Mammary epithelial cell (primary cell): ENCODE measurements at regions of chr3 and their contacts with region 1.

Region 1: DNA sequence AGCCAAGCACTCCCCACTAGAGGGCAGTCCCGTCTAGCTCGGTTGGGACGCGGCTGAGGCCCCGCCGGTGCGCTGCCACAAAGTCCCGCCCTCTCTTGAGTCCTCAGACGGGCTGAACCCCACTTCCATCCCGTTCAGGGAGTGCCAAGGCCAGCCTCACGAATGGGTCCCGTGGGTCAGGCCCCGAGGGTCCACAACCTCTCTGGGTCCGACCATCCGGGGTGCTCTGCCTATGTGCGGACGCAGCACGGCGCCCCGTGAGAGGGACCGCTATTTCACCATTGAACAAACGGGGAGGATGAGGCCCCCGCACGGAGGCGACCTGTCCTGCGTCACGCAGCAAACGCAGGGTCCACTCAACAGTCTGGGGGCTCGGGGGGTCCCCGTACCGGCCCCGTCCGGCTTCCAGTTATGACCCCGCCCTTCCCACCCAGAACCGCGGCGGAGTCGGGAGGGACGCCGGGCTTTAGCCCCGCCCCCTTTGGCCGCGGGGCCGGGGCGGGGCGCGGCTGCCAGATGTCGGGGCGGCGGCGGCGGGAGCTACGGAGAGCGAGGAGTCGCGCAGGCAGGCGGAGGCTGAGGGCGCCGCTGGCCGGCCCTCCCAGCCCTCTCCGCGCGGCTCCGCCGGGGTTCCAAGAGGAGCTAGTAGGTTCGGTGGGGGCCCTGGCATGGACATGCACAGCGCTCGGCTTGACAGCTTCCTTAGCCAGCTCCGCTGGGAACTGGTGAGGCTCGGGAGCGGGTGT is at the start of gene INKA1:
- DNase-seq: peak; percentile 82
- H3K4me3 ChIP-seq: peak within 1 kb of the TSS; percentile 70 to 85 (median 77)
- H3K27ac ChIP-seq: peak within 1 kb of the TSS; percentile 40
- H3K4me1 ChIP-seq: peaks cover 43% of the 10 kb centered on the region
- H3K27me3 ChIP-seq: no peaks in the 10 kb centered on the region
- CTCF ChIP-seq: peak; percentile 79 to 92
- total RNA-seq, gene INKA1: 17.3 to 22.6 TPM

Region 2: DNA sequence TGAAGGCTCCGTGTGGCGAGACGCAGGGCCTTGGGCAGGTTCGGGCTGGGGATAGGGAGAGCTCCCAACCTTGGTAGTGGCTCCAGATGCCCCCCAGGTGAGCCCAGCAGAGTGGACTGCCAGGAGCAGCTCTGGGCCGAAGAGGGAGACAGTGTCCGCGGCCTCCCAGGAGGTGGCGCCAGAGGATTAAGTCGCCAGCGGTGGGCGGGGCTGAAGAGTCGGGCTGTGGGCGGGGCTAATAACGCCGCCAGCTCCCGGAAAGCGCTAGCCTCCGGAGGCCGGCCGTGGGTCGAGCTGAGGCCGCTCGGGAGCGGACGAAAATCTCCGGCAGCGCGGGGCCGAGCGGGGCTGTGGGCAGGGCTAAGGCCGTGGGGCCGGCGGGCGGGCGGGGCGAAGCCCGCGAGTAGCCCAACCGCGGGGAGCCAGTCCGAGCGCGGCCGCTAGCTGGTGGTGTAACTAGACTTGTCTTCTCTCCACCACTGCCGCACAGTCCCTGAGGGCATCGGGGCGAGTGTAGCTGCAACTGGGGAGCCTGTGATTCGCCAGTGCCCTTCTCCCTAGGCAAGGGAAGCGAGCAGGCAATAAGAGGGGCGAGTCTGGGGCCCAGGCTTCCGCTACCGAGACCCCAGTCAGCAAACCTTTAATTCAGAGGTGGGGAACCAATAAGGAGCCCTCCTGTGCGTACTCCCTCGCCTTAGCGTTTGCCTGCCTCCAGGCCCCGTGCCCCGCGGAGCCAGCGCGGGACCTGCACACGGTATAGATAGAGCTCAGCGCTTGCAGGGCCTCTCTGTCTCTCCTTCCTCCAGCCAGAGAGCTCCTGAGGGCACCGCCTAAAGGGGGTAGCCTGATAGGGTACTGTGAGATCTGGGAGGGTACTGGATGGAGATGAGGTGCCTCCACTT is 263.0 kb before region 1 on chr3:
- CTCF ChIA-PET with region 1: no interaction called
- dilution Hi-C with region 1: no loop called
- in situ Hi-C with region 1: no loop called
- intact Hi-C with region 1: loop called (anchors 1 kb)
- DNase-seq: peak; percentile 93
- H3K4me3 ChIP-seq: peak overlapping the region; percentile 30 to 47 (median 42)
- H3K27ac ChIP-seq: no peak overlapping the region
- H3K4me1 ChIP-seq: peaks cover 5% of the 10 kb centered on the region
- H3K27me3 ChIP-seq: no peaks in the 10 kb centered on the region
- CTCF ChIP-seq: peak; percentile 55 to 89

Region 3: GRCh38 chr3:49703443-49703927 is 99.4 kb before region 1 on chr3:
- CTCF ChIA-PET with region 1: no interaction called
- dilution Hi-C with region 1: no loop called
- in situ Hi-C with region 1: no loop called
- intact Hi-C with region 1: loop called (anchors 1 kb)
- DNase-seq: peak; percentile 49
- H3K4me3 ChIP-seq: no peak overlapping the region
- H3K27ac ChIP-seq: no peak overlapping the region
- H3K4me1 ChIP-seq: peaks cover 3% of the 10 kb centered on the region
- H3K27me3 ChIP-seq: no peaks in the 10 kb centered on the region
- CTCF ChIP-seq: peak; percentile 93 to 94

Region 4: DNA sequence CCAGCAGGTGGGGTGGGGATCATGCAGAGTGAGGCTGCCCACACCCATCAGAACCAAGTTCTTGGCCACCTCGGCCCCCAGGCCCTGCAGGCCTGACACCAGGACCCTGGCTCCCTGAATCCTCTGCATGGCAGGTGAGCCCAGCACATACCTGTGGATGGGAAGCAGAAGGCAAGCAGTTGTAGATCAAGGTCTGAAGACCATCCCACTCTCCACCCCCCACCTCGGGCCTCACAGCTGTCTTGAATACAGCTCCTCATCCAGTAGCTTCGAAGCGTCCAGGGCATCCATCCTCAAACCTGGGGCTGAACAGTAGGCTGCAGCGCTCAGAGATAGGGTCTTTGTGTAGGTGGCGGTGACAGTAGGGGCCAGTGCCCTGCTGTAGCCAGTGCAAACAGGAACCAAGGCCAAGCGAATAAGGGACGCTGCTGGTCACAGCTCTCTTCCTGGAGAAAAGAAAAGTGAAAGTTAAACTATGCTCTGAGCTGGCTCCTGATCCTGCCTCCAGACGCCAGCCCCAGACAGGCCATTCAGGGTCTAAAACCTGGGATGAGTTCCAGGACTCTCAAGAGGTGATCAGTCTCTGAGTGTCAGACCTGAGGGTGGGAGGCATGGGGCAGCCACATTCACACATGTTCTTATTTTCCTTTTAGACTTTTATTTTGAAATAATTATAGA is 10.7 kb after region 1 on chr3 and contains the start of gene UBA7:
- CTCF ChIA-PET with region 1: no interaction called
- dilution Hi-C with region 1: no loop called
- in situ Hi-C with region 1: no loop called
- intact Hi-C with region 1: loop called (anchors 1 kb)
- DNase-seq: peak; percentile 52
- H3K4me3 ChIP-seq: peak within 1 kb of the TSS; percentile 19 to 37 (median 31)
- H3K27ac ChIP-seq: no peak within 1 kb of the TSS
- H3K4me1 ChIP-seq: peaks cover 10% of the 10 kb centered on the region
- H3K27me3 ChIP-seq: no peaks in the 10 kb centered on the region
- CTCF ChIP-seq: no peak
- total RNA-seq, gene UBA7: 9.1 to 11.3 TPM

Region 5: DNA sequence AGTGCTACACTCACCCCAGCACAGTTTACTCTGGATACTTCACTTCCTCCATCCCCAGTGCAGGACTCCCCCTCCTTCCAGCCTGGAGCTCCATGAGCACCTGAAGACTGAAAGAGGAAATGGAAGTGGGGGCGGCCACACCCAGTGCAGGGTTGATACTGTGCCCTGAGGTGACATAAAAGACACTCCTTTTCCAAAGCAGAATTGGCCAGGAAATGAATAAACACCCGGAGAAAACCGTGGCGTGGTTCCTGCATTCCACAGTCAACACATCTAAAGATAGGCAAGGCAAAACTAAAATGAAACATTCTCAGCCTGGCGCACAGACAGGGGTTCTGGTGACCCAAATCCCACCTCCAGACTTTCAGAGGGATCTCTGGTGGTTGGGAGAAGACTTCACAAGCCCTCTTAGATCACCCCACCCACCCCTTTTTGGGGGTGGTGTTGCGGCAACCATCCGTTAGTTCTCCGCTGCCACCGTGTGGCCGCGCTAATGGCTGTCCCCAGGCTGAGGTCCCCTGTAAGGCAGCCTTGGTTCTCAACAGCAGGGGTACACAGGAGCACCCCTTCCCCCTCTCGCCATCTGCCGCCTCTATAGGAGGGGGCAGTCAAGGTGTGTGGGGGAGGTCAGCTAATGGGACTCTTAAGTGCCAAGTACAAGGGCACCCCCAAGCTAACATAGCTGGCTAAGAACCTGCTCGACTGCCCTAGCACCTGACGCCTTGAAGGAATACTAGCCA is 103.3 kb after region 1 on chr3:
- CTCF ChIA-PET with region 1: interaction called, 5 read pairs
- dilution Hi-C with region 1: no loop called
- in situ Hi-C with region 1: no loop called
- intact Hi-C with region 1: loop called (anchors 1 kb)
- DNase-seq: peak; percentile 60
- H3K4me3 ChIP-seq: peak overlapping the region; percentile 17 to 34 (median 25)
- H3K27ac ChIP-seq: peak overlapping the region; percentile 31
- H3K4me1 ChIP-seq: peaks cover 48% of the 10 kb centered on the region
- H3K27me3 ChIP-seq: no peaks in the 10 kb centered on the region
- CTCF ChIP-seq: peak; percentile 59 to 83

Region 6: DNA sequence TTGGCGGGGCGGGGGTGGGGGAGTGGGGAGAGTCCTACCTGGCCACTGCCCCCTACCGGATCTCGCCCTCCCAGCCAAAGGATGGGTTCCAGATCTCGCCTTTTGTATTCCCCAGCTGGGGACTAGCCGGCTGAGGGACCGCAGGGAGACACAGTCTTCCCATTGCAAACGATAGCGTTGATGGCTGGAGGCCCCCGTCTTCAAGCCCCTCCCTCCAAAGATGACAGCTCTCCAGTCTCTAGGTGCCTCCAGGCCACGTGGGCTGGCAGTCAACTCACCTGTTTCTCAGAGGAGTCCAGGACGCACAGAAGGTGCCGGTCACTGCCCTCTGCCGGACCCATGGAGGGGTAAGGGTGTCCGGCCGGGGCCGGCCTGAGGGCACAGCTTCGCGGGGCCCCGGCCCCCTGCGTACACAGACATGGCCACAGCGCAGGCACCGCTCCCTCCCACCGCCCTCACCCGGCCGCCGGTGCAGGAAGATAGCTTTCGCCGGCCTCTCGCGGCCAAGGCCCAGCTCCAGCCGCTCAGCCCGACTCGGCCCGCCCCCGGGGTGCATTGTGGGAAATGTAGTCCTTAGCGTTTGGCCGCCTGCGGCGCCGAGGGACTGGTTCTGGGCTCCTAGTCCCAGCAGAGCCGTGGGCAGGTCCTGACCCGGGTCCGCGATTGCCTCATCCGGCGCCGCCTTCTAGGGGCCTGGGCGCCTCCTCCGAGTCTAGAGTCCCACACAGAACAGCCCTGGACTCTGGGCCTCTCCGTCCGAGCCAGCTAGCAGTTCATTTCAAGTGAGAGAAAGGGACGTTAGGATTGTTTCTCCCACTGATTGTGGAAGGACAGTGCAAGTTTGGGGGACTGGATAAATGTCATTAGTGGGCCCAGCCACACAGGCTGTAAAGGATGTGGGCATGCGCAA is 126.7 kb after region 1 on chr3 and contains the start of gene MON1A:
- CTCF ChIA-PET with region 1: no interaction called
- dilution Hi-C with region 1: no loop called
- in situ Hi-C with region 1: no loop called
- intact Hi-C with region 1: loop called (anchors 1 kb)
- DNase-seq: peak; percentile 89
- H3K4me3 ChIP-seq: peak within 1 kb of the TSS; percentile 65 to 72 (median 66)
- H3K27ac ChIP-seq: no peak within 1 kb of the TSS
- H3K4me1 ChIP-seq: peaks cover 25% of the 10 kb centered on the region
- H3K27me3 ChIP-seq: no peaks in the 10 kb centered on the region
- CTCF ChIP-seq: peak in 1 of 2 donors; percentile 47
- total RNA-seq, gene MON1A: 11.5 to 15.9 TPM

Region 7: GRCh38 chr3:50088725-50089608 is 286.1 kb after region 1 on chr3 and contains the start of gene RBM5:
- CTCF ChIA-PET with region 1: no interaction called
- dilution Hi-C with region 1: no loop called
- in situ Hi-C with region 1: no loop called
- intact Hi-C with region 1: loop called (anchors 5 kb)
- DNase-seq: peak; percentile 86
- H3K4me3 ChIP-seq: peak within 1 kb of the TSS; percentile 65 to 98 (median 96)
- H3K27ac ChIP-seq: peak within 1 kb of the TSS; percentile 90
- H3K4me1 ChIP-seq: peaks cover 18% of the 10 kb centered on the region
- H3K27me3 ChIP-seq: no peaks in the 10 kb centered on the region
- CTCF ChIP-seq: no peak
- total RNA-seq, gene RBM5: 105 to 116 TPM